Naive thymus-derived CD4-positive, alpha-beta T cell (primary cell): ENCODE measurements at regions of chr16 and their contacts with region 1.

Region 1: DNA sequence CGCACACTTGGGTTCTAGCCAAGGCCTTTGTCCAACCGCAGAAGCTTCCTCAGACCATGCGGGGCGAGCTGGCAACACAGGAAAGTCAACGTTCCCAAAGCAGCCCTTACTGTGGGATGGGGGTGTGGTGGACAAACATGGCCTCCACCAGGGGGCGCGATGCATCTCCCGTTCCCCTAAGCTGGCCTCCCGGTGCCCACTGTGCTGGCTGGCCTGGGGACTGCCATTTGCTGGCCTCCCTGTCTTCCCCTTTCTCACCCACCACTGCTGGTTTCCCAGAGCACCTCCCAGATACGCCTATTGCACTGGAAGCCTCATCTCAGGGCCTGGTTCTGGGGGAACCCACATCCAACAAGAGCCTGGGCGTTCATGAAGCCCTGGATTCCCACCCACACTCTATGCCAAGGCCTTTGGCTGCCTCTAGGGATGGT is 145.3 kb downstream of the IRF8 start:
- DNase-seq: peak in 7 of 9 donors; percentile 12 to 51 (median 22)
- ATAC-seq: no peak
- H3K4me3 ChIP-seq: no peak overlapping the region
- H3K4me3 Mint-ChIP-seq: peak overlapping the region in 1 of 10 donors; percentile 46
- H3K27ac ChIP-seq: no peak overlapping the region
- H3K27ac Mint-ChIP-seq: peak overlapping the region in 3 of 9 donors; percentile 55 to 79 (median 62)
- H3K4me1 ChIP-seq: peaks cover 8 to 20% of the 10 kb centered on the region in 2 donors
- H3K4me1 Mint-ChIP-seq: peaks cover 13 to 29% (median 19%) of the 10 kb centered on the region in 7 donors
- H3K27me3 ChIP-seq: no peaks in the 10 kb centered on the region
- H3K27me3 Mint-ChIP-seq: peaks cover 25 to 39% (median 29%) of the 10 kb centered on the region in 5 donors

Region 2: DNA sequence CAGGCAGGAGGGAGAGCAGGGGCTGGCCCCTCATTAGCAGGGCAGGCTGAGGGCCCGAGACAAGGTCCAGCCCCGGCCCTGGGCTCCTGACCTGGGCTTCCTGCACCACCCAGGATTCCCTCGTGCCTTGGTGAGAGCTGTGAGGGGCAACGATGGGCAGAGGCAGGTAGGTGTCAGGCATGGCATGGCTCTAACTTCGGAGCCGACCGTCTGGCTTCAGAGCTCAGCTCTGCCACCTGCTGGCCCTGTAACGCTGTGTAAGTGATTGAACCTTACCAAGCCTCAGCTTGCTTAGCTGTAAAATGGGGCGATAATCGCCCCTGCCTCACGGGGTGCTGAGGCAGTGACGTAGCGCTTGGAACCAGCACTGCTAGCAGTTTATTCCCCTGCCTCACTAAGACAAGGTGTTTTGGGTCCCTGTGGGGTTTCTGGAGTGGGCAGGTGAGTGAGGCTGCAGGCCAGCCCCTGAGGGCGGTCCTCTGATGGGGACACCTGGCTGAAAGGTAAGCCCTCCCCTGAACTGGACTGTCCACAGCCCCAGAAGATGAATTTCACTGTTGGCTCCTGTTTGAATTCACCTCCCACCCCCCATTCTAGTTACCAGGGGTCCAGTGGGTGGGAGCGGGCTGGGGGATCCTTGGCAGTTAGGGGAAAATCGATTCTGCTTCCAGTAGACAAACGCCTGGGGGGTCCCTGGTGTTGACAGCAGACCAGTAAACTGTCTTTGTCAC is 615.9 kb before region 1 on chr16:
- CTCF ChIA-PET with region 1: no interaction called
- POLR2A ChIA-PET with region 1: no interaction called
- intact Hi-C with region 1: no loop called
- DNase-seq: peak in 3 of 9 donors; percentile 7 to 42 (median 12)
- ATAC-seq: peak; percentile 71
- H3K4me3 ChIP-seq: no peak overlapping the region
- H3K4me3 Mint-ChIP-seq: no peak overlapping the region
- H3K27ac ChIP-seq: no peak overlapping the region
- H3K27ac Mint-ChIP-seq: no peak overlapping the region
- H3K4me1 ChIP-seq: no peaks in the 10 kb centered on the region
- H3K4me1 Mint-ChIP-seq: peaks cover 0 to 1% (median 0%) of the 10 kb centered on the region in 7 donors
- H3K27me3 ChIP-seq: no peaks in the 10 kb centered on the region
- H3K27me3 Mint-ChIP-seq: peaks cover 0 to 13% (median 5%) of the 10 kb centered on the region in 5 donors

Region 3: DNA sequence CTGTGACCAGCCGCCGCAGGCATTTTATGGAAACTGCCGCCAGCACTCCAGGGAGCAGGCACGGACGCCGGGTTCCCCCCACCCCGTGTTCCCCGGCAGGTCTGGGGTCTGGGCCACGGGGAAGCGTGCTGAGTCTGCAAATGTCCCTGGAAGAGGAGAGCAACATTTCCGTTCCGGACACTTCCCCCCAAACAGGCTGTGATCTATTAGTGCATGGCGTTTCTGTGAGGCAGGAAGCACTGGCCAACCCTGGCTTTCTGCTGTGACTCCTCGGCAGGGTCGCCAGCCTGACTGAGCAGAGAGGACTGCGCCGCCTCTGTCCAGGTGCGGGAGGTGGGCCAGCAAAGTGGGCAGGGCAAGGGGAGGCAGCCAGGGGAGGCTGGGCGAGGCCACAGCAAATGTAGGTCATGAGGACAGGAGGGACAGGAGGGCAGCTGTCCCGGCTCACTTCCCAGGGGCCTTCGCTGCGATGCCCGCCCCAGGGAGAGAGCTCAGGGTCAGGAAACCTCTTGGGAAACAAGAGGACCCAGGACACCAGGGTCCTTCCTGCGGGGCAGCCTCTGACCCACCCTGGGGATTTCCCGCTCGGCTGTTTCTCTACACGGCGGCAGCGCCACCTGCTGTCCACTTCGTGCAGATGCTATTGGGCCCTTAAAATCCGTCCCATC is 475.5 kb after region 1 on chr16:
- CTCF ChIA-PET with region 1: no interaction called
- POLR2A ChIA-PET with region 1: no interaction called
- intact Hi-C with region 1: loop called in 1 of 2 experiments (anchors 1 kb)
- DNase-seq: peak in 8 of 9 donors; percentile 22 to 71 (median 30)
- ATAC-seq: peak; percentile 78
- H3K4me3 ChIP-seq: no peak overlapping the region
- H3K4me3 Mint-ChIP-seq: peak overlapping the region in 7 of 10 donors; percentile 29 to 77 (median 38)
- H3K27ac ChIP-seq: no peak overlapping the region
- H3K27ac Mint-ChIP-seq: no peak overlapping the region
- H3K4me1 ChIP-seq: peaks cover 0 to 3% of the 10 kb centered on the region in 2 donors
- H3K4me1 Mint-ChIP-seq: peaks cover 0 to 9% (median 3%) of the 10 kb centered on the region in 7 donors
- H3K27me3 ChIP-seq: peaks cover 0 to 15% of the 10 kb centered on the region in 2 donors
- H3K27me3 Mint-ChIP-seq: peaks cover 31 to 49% (median 49%) of the 10 kb centered on the region in 5 donors